Mammary epithelial cell (primary cell): ENCODE measurements at regions of chr15 and their contacts with region 1.

Region 1: GRCh38 chr15:37880009-37880834 is 54.2 kb upstream of the TMCO5A start:
- DNase-seq: peak; percentile 16
- H3K4me3 ChIP-seq: no peak overlapping the region
- H3K27ac ChIP-seq: no peak overlapping the region
- H3K4me1 ChIP-seq: no peaks in the 10 kb centered on the region
- H3K27me3 ChIP-seq: peaks cover 3% of the 10 kb centered on the region
- CTCF ChIP-seq: peak; percentile 73 to 74

Region 2: DNA sequence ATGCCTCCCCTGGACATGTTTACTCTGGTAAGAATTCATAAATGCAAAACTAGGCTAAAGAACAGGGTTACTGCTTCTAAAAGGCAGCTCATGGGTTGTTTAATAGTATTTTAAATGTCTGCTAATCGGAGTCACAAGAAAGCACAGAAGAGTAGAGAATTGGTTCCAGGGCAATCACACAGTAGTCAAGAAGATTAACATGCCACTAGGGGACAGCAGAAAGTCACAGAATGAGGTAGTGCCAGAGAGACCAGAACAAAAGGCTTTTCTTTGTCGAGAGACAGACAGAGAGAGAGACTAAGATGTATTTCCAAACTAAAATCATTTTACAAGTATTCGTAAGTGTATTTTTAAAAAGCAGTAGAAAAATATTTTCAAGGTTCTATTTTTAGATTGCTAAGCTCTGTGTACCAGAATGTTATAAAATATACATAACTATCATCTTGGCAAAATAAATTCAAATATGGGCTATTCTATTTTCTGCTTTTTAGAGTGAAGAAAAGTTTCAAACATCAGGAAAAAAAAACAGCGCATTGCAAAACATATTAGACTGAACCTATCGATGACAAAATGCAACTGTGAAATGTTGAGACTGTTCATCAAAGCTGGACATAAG is 1379.1 kb before region 1 on chr15:
- CTCF ChIA-PET with region 1: no interaction called
- dilution Hi-C with region 1: no loop called
- in situ Hi-C with region 1: no loop called
- intact Hi-C with region 1: loop called (anchors 10 kb)
- DNase-seq: peak; percentile 63
- H3K4me3 ChIP-seq: no peak overlapping the region
- H3K27ac ChIP-seq: no peak overlapping the region
- H3K4me1 ChIP-seq: no peaks in the 10 kb centered on the region
- H3K27me3 ChIP-seq: no peaks in the 10 kb centered on the region
- CTCF ChIP-seq: peak; percentile 73 to 95

Region 3: DNA sequence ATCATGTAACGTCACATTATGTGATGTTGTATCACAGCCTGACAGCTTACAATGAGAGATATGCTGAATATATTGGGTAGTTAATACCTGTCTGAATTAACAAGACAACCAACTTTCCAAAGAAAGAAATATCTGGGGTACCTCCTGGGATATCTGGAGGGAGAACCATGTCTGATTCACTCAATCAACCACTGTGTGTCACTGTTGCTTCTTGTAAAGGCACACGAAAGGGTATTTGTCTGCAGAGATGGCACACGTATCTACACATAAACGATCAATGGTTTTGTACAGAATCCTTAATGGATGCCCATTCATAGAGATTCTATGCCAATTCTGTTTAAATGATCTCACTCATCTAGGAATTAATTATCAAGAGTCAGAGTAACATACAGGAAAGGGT is 197.9 kb before region 1 on chr15:
- CTCF ChIA-PET with region 1: no interaction called
- dilution Hi-C with region 1: no loop called
- in situ Hi-C with region 1: loop called in 1 of 2 experiments (anchors 25 kb)
- intact Hi-C with region 1: loop called (anchors 1 kb)
- DNase-seq: peak; percentile 11
- H3K4me3 ChIP-seq: no peak overlapping the region
- H3K27ac ChIP-seq: no peak overlapping the region
- H3K4me1 ChIP-seq: no peaks in the 10 kb centered on the region
- H3K27me3 ChIP-seq: no peaks in the 10 kb centered on the region
- CTCF ChIP-seq: peak; percentile 20 to 36

Region 4: GRCh38 chr15:37698679-37699078 is 181.5 kb before region 1 on chr15:
- CTCF ChIA-PET with region 1: no interaction called
- dilution Hi-C with region 1: no loop called
- in situ Hi-C with region 1: loop called in 1 of 2 experiments (anchors 25 kb)
- intact Hi-C with region 1: loop called (anchors 1 kb)
- DNase-seq: peak; percentile 11
- H3K4me3 ChIP-seq: no peak overlapping the region
- H3K27ac ChIP-seq: no peak overlapping the region
- H3K4me1 ChIP-seq: no peaks in the 10 kb centered on the region
- H3K27me3 ChIP-seq: no peaks in the 10 kb centered on the region
- CTCF ChIP-seq: peak in 1 of 2 donors; percentile 5

Region 5: DNA sequence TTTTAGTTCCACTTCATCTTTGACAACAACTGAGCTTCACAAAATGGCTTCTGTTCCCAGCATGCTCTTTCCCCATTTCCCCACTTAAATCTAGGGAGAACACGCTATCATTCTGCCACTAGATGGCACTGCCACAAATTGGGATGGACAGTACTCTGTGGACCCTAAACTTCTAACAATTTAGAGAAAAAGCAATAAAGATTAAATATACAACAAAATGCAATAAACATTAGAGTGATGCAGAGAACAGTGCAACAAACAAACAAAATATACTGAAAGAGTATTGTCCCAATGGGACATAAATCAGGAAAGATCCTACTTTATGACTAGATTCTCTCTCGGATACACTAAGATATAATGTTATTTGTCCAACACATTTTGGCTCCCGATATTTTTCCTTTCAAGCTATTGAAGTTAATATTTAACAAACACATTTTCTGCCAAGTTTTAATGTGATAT is 115.5 kb before region 1 on chr15:
- CTCF ChIA-PET with region 1: interaction called, 3 read pairs
- dilution Hi-C with region 1: no loop called
- in situ Hi-C with region 1: no loop called
- intact Hi-C with region 1: loop called (anchors 1 kb)
- DNase-seq: peak; percentile 43
- H3K4me3 ChIP-seq: no peak overlapping the region
- H3K27ac ChIP-seq: no peak overlapping the region
- H3K4me1 ChIP-seq: no peaks in the 10 kb centered on the region
- H3K27me3 ChIP-seq: no peaks in the 10 kb centered on the region
- CTCF ChIP-seq: peak; percentile 66 to 68